BJ (cell line): ENCODE measurements at regions of chr19 and their contacts with region 1.

Region 1: GRCh38 chr19:38634757-38635482 is 12.5 kb upstream of the ACTN4 start:
- DNase-seq: no peak
- H3K4me3 ChIP-seq: no peak overlapping the region
- H3K27me3 ChIP-seq: no peaks in the 10 kb centered on the region
- CTCF ChIP-seq: peak; percentile 94

Region 2: GRCh38 chr19:38402967-38403861 is 231.7 kb before region 1 on chr19 and contains the start of gene FAM98C:
- CTCF ChIA-PET with region 1: interaction called, 47 read pairs
- POLR2A ChIA-PET with region 1: no interaction called
- DNase-seq: peak; percentile 65
- H3K4me3 ChIP-seq: peak within 1 kb of the TSS; percentile 88
- H3K27me3 ChIP-seq: no peaks in the 10 kb centered on the region
- CTCF ChIP-seq: peak; percentile 74
- polyA plus RNA-seq, gene FAM98C: 9.9 and 12.2 TPM in 2 replicates

Region 3: DNA sequence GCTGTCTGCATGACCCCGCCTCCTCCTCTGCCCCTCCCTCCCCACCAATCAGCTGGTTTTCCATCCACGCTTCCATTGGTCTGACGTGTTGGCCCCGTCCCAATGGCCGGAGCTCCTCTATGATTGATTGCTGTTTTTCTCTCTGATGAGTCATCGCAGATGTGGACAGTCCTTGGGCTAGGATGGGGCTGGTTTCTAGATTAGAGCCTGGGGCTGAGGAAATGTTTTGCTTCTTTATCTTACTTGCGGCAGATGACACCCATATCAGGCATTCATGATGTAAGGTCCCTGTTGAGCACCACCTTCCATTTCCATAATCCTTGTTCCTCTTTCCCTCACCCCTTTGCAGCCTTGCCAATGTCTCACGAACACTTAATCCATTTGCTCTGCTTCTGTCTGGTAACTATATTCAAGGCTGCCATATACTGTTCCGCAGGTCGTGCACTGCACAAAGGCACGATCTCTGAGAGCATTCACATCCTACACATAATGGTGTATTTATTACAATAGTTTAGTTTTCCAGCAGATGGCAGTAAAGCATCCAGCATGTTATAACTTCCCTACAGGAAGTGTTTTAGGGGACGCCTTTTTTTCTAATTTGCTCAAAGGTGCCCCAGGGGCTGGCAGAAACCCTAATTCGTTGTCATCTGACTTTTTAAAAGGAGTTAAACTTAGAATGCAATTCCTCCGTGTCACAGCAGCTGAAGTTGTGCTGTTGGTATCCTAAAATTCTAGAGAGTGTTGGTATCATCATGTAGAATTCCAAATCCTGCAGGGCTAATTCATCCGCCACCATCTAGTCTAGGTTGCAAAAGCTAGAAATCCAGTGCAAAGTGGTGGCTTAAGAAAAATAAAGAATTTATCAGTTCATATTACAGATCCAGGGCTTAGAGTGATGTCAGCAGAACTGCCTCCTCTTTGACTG is 90.6 kb before region 1 on chr19:
- CTCF ChIA-PET with region 1: interaction called, 26 read pairs
- POLR2A ChIA-PET with region 1: no interaction called
- DNase-seq: peak; percentile 40
- H3K4me3 ChIP-seq: no peak overlapping the region; the same call in 1 of the 2 replicates
- H3K27me3 ChIP-seq: no peaks in the 10 kb centered on the region; the same call in 1 of the 2 replicates
- CTCF ChIP-seq: peak; percentile 54

Region 4: GRCh38 chr19:38618590-38619360 is 16.1 kb before region 1 on chr19 and contains the start of gene EIF3K:
- CTCF ChIA-PET with region 1: interaction called, 13 read pairs
- POLR2A ChIA-PET with region 1: no interaction called
- DNase-seq: peak; percentile 95
- H3K4me3 ChIP-seq: peak within 1 kb of the TSS; percentile 92
- H3K27me3 ChIP-seq: no peaks in the 10 kb centered on the region
- CTCF ChIP-seq: no peak
- polyA plus RNA-seq, gene EIF3K: 230 and 357 TPM in 2 replicates

Region 5: GRCh38 chr19:38647368-38647965 is 12.5 kb after region 1 on chr19 and contains the start of gene ACTN4:
- CTCF ChIA-PET with region 1: interaction called, 49 read pairs
- POLR2A ChIA-PET with region 1: no interaction called
- DNase-seq: peak; percentile 74
- H3K4me3 ChIP-seq: peak within 1 kb of the TSS; percentile 100
- H3K27me3 ChIP-seq: no peaks in the 10 kb centered on the region
- CTCF ChIP-seq: no peak
- polyA plus RNA-seq, gene ACTN4: 592 and 970 TPM in 2 replicates

Region 6: GRCh38 chr19:38759590-38760003 is 124.7 kb after region 1 on chr19:
- CTCF ChIA-PET with region 1: no interaction called
- POLR2A ChIA-PET with region 1: no interaction called
- DNase-seq: no peak
- H3K4me3 ChIP-seq: no peak overlapping the region
- H3K27me3 ChIP-seq: no peaks in the 10 kb centered on the region
- CTCF ChIP-seq: no peak